ENCODE measurements at regions of chr11 and their contacts with region 1.

Region 1: DNA sequence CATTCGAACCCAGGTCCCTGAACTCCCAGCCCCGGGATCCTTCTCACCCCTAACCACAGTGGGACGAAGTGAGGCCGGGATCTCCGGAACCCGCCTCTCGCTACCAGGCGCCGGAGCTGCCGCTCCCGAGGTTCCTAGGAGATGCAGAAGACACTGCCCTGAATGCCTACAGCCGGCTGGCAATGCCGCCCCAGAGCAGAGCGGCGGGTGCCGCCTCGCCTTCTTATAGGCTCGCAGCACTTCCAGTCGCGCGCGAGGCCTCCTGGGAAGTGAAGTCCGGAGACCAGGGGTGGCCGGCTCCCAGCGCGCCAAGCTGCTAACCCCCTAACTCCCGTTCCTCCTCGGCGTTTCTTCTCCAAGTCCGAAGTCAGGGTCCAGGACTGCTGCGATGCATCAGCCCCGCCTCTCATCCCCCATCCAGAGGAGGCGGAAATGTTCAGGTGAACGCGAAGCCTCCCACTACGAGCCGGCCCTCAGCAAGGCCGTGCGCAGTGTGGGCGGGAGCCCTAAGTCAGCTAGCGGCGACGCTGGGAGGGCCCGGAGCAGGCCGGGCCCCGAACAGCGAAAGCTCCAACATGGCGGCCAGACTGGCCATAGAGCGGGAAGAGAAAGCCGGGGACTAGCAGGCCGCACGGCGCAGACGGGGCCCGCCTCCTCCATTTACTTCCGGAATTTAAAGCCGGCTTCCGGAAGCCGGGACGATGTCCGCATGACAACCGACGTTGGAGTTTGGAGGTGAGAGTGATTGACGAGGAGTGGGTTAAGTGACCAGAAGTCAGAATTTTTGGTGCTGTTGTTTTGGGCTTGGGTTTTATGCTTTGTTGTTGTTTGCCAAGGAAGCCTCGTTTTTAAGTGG is at the starts of genes CYB561A3 and TMEM138:
- DNase-seq: peak; percentile 94 to 96
- H3K4me3 ChIP-seq: peak within 1 kb of the TSS; percentile 72
- H3K4me3 Mint-ChIP-seq: peak within 1 kb of the TSS; percentile 87
- H3K27ac Mint-ChIP-seq: peak within 1 kb of the TSS; percentile 93
- H3K4me1 ChIP-seq: 0 out of 2 replicates have a peak, but pooled peaks cover 3% of the 10 kb centered on the region
- H3K4me1 Mint-ChIP-seq: no peaks in the 10 kb centered on the region
- H3K27me3 ChIP-seq: no peaks in the 10 kb centered on the region
- H3K27me3 Mint-ChIP-seq: no peaks in the 10 kb centered on the region
- CTCF ChIP-seq: no peak
- total RNA-seq, gene CYB561A3: 33.6 and 34.9 TPM in 2 replicates
- total RNA-seq, gene TMEM138: 46.3 and 48.3 TPM in 2 replicates

Region 2: DNA sequence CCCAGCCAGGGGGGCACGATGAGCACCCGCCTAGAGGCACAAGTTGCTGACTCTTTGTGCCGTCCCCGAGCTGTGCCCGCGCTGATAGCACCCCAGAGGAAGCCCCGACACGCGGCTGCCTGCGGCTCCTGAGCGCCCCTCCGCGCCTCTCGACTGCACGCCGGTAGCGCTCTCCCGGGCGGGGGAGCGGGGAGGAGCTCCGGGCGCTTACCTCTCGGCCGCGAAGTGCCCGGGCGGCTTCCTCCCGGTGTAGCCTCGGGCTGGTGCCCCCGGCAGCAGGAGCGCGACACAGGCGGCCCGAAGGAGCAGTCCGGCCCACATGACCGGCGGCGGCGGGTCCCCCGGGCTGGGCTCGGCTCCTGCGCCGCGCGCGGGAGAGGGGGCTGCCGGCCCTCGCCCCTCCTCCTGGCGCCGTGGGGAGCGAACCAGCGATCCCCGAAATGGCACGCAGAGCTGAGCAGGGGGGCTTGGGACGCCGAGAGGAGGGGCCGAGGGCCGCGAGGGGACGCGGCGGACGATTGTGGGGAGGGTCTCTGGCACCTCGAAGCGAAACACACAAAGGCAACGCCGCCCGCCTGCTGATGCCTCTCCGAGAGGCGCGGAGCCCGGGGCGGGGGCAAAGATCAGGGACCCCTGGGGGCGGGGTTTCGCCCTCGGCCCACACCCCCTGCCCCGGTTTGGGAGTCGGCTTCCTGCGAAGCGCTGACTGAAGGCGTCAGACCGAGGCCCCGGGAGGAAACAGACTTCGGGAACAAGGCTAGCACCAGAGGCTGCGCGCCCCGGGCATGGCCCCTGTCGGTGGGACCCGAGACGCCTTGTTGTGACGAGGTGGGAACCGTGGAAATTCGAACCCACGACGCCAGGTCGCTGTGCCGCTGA is 67.0 kb before region 1 on chr11 and contains the start of gene VWCE:
- CTCF ChIA-PET with region 1: no interaction called
- POLR2A ChIA-PET with region 1: interaction called, 22 read pairs
- intact Hi-C with region 1: no loop called
- DNase-seq: peak; percentile 71 to 82
- H3K4me3 ChIP-seq: peak within 1 kb of the TSS; percentile 80
- H3K4me3 Mint-ChIP-seq: peak within 1 kb of the TSS; percentile 96
- H3K27ac Mint-ChIP-seq: peak within 1 kb of the TSS; percentile 88
- H3K4me1 ChIP-seq: peaks cover 32% of the 10 kb centered on the region
- H3K4me1 Mint-ChIP-seq: peaks cover 12% of the 10 kb centered on the region
- H3K27me3 ChIP-seq: no peaks in the 10 kb centered on the region
- H3K27me3 Mint-ChIP-seq: no peaks in the 10 kb centered on the region
- CTCF ChIP-seq: peak; percentile 19 to 41
- total RNA-seq, gene VWCE: 17.7 and 18.6 TPM in 2 replicates

Region 3: GRCh38 chr11:61332797-61333549 is 28.9 kb before region 1 on chr11 and contains the starts of genes DDB1 and TKFC:
- CTCF ChIA-PET with region 1: interaction called, 41 read pairs
- POLR2A ChIA-PET with region 1: interaction called, 21 read pairs
- intact Hi-C with region 1: loop called (anchors 1 kb)
- DNase-seq: peak; percentile 96 to 98
- H3K4me3 ChIP-seq: peak within 1 kb of the TSS; percentile 61
- H3K4me3 Mint-ChIP-seq: peak within 1 kb of the TSS; percentile 100
- H3K27ac Mint-ChIP-seq: peak within 1 kb of the TSS; percentile 98
- H3K4me1 ChIP-seq: peaks cover 13% of the 10 kb centered on the region
- H3K4me1 Mint-ChIP-seq: peaks cover 17% of the 10 kb centered on the region
- H3K27me3 ChIP-seq: no peaks in the 10 kb centered on the region
- H3K27me3 Mint-ChIP-seq: no peaks in the 10 kb centered on the region
- CTCF ChIP-seq: no peak
- total RNA-seq, gene DDB1: 284 and 303 TPM in 2 replicates
- total RNA-seq, gene TKFC: 86.2 and 99.0 TPM in 2 replicates

Region 4: DNA sequence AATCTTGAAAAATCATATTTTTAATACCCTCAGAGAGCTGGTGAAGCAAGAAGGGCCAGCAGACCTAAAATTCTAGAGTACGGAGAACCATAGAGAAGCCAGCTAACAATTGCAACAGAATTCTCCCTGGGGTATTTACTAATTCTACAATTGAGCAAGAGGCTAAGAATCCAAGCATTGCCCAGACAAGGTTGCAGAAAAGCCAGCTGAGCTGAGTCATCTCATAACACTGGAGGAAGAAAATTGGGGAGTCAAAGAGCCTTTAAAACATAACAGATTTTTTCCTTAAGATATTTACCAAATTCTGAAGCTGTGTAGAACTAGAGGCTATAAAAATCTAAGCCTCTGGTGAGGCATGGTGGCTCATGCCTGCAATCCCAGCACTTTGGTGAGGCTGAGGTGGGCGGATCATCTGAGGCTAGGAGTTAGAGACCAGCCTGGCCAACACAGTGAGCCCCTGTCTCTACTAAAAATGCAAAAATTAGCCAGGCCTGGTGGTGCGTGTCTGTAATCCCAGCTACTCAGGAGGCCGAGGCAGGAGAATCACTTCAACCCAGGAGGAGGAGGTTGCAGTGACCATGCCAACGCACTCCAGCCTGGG is 16.9 kb after region 1 on chr11:
- CTCF ChIA-PET with region 1: interaction called, 38 read pairs
- POLR2A ChIA-PET with region 1: interaction called, 19 read pairs
- intact Hi-C with region 1: no loop called
- DNase-seq: peak in 1 of 2 experiments; percentile 55
- H3K4me3 ChIP-seq: no peak overlapping the region
- H3K4me3 Mint-ChIP-seq: no peak overlapping the region
- H3K27ac Mint-ChIP-seq: no peak overlapping the region
- H3K4me1 ChIP-seq: peaks cover 12% of the 10 kb centered on the region
- H3K4me1 Mint-ChIP-seq: peaks cover 7% of the 10 kb centered on the region
- H3K27me3 ChIP-seq: no peaks in the 10 kb centered on the region
- H3K27me3 Mint-ChIP-seq: no peaks in the 10 kb centered on the region
- CTCF ChIP-seq: no peak

Region 5: DNA sequence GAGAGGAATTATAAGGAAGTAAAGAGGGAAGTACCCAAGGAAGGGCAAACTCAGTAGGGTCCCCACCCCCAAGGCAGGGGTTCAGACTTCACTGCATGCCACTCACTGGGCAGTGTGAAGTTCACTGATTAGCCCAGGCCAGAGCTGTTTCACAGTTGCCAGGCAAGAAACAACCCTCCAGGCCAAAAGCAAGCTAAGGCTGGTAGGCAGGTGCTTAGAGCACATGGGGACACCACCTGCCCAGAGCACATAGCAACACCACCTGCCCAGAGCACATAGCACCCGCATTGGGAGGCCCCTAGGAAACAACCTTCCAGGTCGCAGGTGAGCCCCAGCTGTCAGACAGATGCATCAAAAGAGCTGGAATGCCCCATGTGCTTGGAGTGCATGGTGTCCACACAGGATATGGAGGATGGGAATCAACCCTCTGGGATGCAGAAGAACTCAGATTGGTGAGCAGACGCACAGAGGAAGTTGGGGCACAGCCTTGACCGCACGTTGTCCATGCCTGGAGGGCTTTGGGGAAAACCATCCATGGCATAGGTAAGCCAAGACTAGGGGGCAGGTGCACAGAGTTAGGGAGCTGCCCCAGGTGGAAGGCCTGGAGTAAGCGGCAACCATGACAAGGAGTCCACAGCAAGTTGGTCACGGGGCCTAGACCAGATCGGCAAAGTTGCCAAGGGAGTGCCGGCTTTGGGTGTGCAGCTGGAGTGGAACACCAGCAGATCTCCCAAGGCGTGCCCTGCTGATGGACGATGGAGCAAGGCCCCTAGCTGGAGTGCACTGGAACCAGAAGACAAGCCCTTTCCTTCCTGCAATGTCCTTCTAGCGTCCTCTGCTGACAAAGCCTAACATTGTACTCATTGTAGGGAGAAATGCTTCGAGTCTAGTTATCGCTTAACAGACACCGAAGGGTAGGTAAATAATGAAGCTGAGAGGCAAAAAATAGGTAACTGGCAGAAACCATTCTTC is 22.6 kb after region 1 on chr11:
- CTCF ChIA-PET with region 1: interaction called, 38 read pairs
- POLR2A ChIA-PET with region 1: interaction called, 7 read pairs
- intact Hi-C with region 1: loop called (anchors 1 kb)
- DNase-seq: peak in 1 of 2 experiments; percentile 47
- H3K4me3 ChIP-seq: no peak overlapping the region
- H3K4me3 Mint-ChIP-seq: no peak overlapping the region
- H3K27ac Mint-ChIP-seq: no peak overlapping the region
- H3K4me1 ChIP-seq: peaks cover 3% of the 10 kb centered on the region; the same call in 1 of the 2 replicates
- H3K4me1 Mint-ChIP-seq: peaks cover 5% of the 10 kb centered on the region
- H3K27me3 ChIP-seq: no peaks in the 10 kb centered on the region
- H3K27me3 Mint-ChIP-seq: no peaks in the 10 kb centered on the region
- CTCF ChIP-seq: peak in 1 of 2 experiments; percentile 44

Region 6: GRCh38 chr11:61392981-61393595 is 31.2 kb after region 1 on chr11:
- CTCF ChIA-PET with region 1: interaction called, 6 read pairs
- POLR2A ChIA-PET with region 1: interaction called, 19 read pairs
- intact Hi-C with region 1: loop called (anchors 1 kb)
- DNase-seq: peak; percentile 23 to 32
- H3K4me3 ChIP-seq: peak overlapping the region; percentile 94
- H3K4me3 Mint-ChIP-seq: peak overlapping the region; percentile 99
- H3K27ac Mint-ChIP-seq: peak overlapping the region; percentile 98
- H3K4me1 ChIP-seq: no peaks in the 10 kb centered on the region
- H3K4me1 Mint-ChIP-seq: no peaks in the 10 kb centered on the region
- H3K27me3 ChIP-seq: no peaks in the 10 kb centered on the region
- H3K27me3 Mint-ChIP-seq: no peaks in the 10 kb centered on the region
- CTCF ChIP-seq: peak in 1 of 2 experiments; percentile 32

Region 7: GRCh38 chr11:61429691-61430582 is 68.0 kb after region 1 on chr11 and contains the starts of genes CPSF7 and SDHAF2:
- CTCF ChIA-PET with region 1: interaction called, 6 read pairs
- POLR2A ChIA-PET with region 1: interaction called, 16 read pairs
- intact Hi-C with region 1: no loop called
- DNase-seq: peak; percentile 97
- H3K4me3 ChIP-seq: peak within 1 kb of the TSS; percentile 67
- H3K4me3 Mint-ChIP-seq: peak within 1 kb of the TSS; percentile 92
- H3K27ac Mint-ChIP-seq: peak within 1 kb of the TSS; percentile 98
- H3K4me1 ChIP-seq: peaks cover 8% of the 10 kb centered on the region; the same call in 1 of the 2 replicates
- H3K4me1 Mint-ChIP-seq: peaks cover 6% of the 10 kb centered on the region
- H3K27me3 ChIP-seq: no peaks in the 10 kb centered on the region
- H3K27me3 Mint-ChIP-seq: no peaks in the 10 kb centered on the region
- CTCF ChIP-seq: no peak
- total RNA-seq, gene CPSF7: 123 and 128 TPM in 2 replicates
- total RNA-seq, gene SDHAF2: 49.2 and 52.1 TPM in 2 replicates

Region 8: GRCh38 chr11:61541598-61541997 is 179.7 kb after region 1 on chr11:
- CTCF ChIA-PET with region 1: no interaction called
- POLR2A ChIA-PET with region 1: no interaction called
- intact Hi-C with region 1: no loop called
- DNase-seq: no peak
- H3K4me3 ChIP-seq: no peak overlapping the region
- H3K4me3 Mint-ChIP-seq: no peak overlapping the region
- H3K27ac Mint-ChIP-seq: no peak overlapping the region
- H3K4me1 ChIP-seq: peaks cover 23% of the 10 kb centered on the region
- H3K4me1 Mint-ChIP-seq: peaks cover 14% of the 10 kb centered on the region
- H3K27me3 ChIP-seq: no peaks in the 10 kb centered on the region
- H3K27me3 Mint-ChIP-seq: no peaks in the 10 kb centered on the region
- CTCF ChIP-seq: no peak

Region 9: DNA sequence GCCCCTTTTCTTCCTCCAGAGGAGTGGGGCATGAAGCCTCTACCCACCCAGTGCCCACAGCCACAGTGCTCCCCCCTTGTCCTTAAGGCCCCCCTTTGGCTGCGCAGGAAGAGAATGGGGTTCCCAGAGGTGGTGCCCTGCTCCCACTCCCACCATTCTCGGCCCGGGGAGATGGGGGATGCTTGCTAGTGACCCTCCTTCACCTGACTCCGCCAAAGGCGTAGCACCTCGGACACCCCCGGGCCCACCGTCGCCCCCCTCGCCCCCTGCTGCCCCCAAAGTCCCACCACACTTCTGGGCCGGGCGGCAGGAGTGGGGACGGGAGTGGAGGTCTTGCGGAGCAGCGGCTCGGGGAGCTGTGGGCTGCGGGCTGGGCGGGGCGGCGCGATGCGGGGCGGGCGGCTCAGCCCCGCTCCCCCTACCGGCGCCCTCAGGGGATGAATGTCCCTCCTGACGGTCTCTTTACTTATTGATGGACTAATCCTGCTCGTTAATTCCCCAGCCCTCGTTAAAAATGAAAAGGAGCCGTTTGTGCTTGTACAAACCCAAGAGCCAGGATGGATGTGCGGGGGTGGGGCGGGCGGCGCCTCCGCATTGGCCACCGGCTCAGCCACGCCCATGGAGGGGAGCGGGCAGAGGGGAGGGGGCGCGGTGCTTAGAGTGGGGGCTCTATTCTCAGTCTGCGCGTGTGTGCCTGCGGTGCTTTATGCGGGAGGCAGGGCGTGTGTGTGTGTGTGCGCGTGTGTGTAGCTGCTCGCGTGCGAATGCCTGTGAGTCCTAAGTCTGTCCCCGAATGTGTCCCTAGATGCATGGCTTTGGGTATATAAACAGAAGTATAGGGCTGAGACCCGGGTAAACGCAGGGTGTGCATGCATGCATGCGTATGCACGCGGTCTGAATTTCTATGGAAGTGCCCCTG is 193.4 kb after region 1 on chr11:
- CTCF ChIA-PET with region 1: no interaction called
- POLR2A ChIA-PET with region 1: no interaction called
- intact Hi-C with region 1: no loop called
- DNase-seq: no peak
- H3K4me3 ChIP-seq: no peak overlapping the region
- H3K4me3 Mint-ChIP-seq: no peak overlapping the region
- H3K27ac Mint-ChIP-seq: no peak overlapping the region
- H3K4me1 ChIP-seq: no peaks in the 10 kb centered on the region; the same call in 1 of the 2 replicates
- H3K4me1 Mint-ChIP-seq: peaks cover 17% of the 10 kb centered on the region
- H3K27me3 ChIP-seq: no peaks in the 10 kb centered on the region
- H3K27me3 Mint-ChIP-seq: no peaks in the 10 kb centered on the region
- CTCF ChIP-seq: no peak